ENCODE measurements at regions of chr13 and their contacts with region 1.

Region 1: DNA sequence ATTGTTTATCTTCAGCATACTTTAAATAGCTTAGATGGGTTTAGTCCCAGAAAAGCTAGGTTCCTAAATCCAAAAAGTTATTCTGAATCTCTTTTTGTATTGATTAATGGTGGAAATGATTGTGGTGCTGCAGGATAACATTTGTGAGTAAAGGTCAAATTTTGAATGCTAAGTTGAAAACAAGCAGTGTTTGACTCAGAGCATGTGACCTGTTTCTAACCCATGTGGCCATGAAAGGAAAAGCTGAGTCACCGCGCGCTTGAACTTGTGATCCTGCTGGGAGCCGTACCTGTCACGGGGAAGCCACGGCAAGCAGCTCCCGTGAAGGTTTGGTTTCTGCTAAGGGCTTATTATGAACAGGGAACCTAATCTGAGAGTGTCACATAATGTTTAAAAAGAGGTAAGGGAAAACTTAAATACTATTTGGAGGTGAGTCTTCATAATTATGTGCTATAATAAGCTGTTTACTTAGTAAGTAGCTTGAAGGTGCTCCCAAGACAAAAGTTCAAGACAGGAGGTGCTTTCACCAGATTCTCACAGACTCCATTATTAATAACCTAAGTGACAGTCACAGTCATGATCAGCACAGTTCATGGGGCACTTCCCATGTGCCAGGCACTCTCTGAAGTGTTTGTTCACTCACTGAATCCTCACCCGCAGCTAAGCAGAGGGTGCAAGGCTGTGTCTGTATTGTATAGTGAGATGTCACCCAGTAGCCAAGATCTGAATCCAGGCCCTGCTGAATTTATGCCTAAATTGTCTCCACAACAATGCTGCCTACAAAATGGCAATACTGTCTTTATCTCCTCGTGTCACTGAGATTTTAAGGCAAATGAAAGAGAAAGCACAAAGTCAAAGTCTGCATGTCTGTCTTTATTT is 286.5 kb downstream of the MYO16 start:
- DNase-seq: no peak
- H3K4me3 ChIP-seq: no peak overlapping the region
- H3K27ac ChIP-seq: no peak overlapping the region; a peak in 1 of 4 replicates
- H3K4me1 ChIP-seq: peaks cover 5 to 18% of the 10 kb centered on the region in 2 experiments
- H3K27me3 ChIP-seq: no peaks in the 10 kb centered on the region; the same call in 1 of the 2 replicates
- CTCF ChIP-seq: no peak
- EP300 ChIP-seq: 0 out of 4 replicates have a peak, but pooled peaks of 1 of the 2 experiments have one; percentile 22
- RAD21 ChIP-seq: no peak

Region 2: DNA sequence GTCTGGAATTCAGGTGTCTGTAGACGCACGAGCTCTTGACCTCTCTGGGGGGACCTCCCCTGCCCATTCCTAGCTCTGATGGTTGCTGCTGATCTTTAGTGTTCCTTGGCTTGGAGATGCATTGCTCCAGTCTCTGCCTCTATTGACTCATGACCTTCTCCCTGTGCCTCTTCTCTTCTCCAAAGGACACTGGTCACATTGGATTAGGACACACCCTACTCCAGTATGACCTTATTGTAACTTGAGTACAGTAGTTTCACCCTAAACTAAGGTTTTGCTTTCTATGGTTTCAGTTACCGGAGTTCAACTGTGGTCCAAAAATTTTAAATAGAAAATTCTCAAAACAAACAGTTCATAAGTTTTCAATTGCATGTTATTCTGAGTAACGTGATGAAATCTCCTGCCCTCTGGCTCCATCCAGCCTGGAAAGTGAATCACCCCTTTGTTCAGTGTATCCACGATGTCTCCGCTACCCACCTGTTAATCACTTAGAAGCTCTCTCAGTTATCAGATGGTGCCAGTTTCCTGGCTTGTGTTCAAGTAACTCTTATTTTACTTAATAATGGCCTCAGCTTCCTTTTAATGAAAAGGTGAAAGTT is 13.2 kb before region 1 on chr13:
- CTCF ChIA-PET with region 1: interaction called, 39 read pairs
- POLR2A ChIA-PET with region 1: no interaction called
- DNase-seq: no peak
- H3K4me3 ChIP-seq: no peak overlapping the region
- H3K27ac ChIP-seq: no peak overlapping the region
- H3K4me1 ChIP-seq: no peaks in the 10 kb centered on the region; a peak in 1 of 4 replicates
- H3K27me3 ChIP-seq: no peaks in the 10 kb centered on the region
- CTCF ChIP-seq: no peak
- EP300 ChIP-seq: no peak
- RAD21 ChIP-seq: no peak

Region 3: DNA sequence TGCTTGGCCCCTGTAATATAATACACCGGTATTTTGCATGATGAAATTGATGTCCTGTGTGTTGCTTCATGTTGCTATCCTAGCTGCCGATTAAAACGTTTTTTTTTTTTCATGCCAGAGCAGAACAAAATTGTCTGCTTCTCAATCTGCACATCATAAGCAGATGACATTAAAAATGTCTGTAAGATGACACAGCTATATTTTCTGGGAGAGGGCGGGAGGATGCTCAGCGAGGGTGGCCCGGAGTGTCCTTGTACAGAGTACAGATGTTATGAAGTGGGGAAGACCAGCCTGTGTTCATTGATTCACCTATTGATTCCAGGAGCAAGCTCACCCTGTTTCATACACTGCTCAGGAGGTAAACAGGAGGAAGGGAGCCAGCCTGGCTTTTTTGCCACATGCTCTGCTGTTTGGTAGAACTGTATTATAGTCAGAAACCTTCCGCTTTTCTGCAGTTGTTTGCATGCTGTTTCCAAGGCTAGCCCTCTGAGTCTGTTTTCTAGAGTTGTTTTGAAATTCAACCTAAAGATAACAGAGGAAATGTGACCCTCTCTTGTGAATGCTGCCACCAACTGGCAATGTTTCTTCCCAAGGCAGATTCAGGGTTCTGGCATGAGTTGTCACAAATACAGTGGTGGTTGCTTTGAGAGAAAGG is 875.2 kb after region 1 on chr13:
- CTCF ChIA-PET with region 1: interaction called, 15 read pairs
- POLR2A ChIA-PET with region 1: interaction called, 4 read pairs
- DNase-seq: peak; percentile 69
- H3K4me3 ChIP-seq: peak overlapping the region in 1 of 2 experiments; percentile 12; a peak in 1 of 4 replicates
- H3K27ac ChIP-seq: peak overlapping the region in 1 of 2 experiments; percentile 85; a peak in 2 of 4 replicates
- H3K4me1 ChIP-seq: peaks cover 6 to 27% of the 10 kb centered on the region in 2 experiments; a peak in 3 of 4 replicates
- H3K27me3 ChIP-seq: no peaks in the 10 kb centered on the region
- CTCF ChIP-seq: peak; percentile 61
- EP300 ChIP-seq: 0 out of 4 replicates have a peak, but pooled peaks of 1 of the 2 experiments have one; percentile 23
- RAD21 ChIP-seq: peak; percentile 84

Region 4: GRCh38 chr13:110012102-110012739 is 1096.3 kb after region 1 on chr13:
- CTCF ChIA-PET with region 1: no interaction called
- POLR2A ChIA-PET with region 1: no interaction called
- DNase-seq: no peak
- H3K4me3 ChIP-seq: no peak overlapping the region; a peak in 1 of 4 replicates
- H3K27ac ChIP-seq: peak overlapping the region; percentile 89 to 98; a peak in 3 of 4 replicates
- H3K4me1 ChIP-seq: peaks cover 13 to 41% of the 10 kb centered on the region in 2 experiments
- H3K27me3 ChIP-seq: no peaks in the 10 kb centered on the region
- CTCF ChIP-seq: no peak
- EP300 ChIP-seq: peak; percentile 71 to 100
- RAD21 ChIP-seq: no peak

Measured in SK-N-SH (cell line).